ENCODE measurements at regions of chr15 and their contacts with region 1.

Region 1: DNA sequence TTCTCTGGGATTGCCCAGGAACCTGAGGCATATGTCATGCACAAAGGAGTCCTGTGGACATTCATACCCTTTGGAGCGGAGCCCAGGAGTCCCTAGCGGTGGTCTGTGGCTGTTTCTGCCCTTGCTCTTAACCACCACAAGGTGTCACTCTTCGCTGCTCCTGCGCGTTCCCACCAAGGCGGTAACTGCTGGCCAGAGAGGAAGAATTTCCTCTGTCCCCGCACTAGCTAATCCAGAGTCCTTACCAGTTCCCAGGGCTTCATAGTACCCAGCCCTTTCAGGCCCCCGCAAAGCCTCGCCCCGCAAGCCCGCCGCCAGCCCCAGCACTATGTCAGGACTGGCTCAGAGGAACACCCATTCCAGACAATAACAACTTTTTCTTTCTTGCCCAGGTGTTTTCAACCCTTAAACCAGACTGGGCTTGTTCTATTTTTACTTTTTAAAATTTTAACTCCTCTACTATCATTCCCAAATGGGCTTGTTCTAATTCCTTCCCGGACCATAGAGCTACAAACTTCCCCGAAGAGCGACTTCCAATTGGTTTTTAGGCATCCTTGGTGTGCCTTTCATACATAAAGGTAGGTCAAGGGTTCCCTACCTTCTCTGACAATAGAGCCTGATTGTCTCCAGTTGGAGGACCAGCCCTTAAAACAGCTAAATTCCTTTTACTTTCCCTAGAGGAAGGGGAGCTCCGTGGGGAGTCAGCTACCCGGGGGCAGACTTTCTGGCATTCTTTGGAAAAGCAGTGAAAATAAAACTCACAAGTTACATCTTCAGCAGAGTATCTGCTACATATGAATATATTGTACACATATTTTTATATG is 31.8 kb upstream of the ZNF774 start:
- DNase-seq: peak; percentile 88
- H3K4me3 ChIP-seq: peak overlapping the region; percentile 14 to 24 (median 15)
- H3K27ac ChIP-seq: peak overlapping the region; percentile 49
- H3K4me1 ChIP-seq: peaks cover 18% of the 10 kb centered on the region
- H3K27me3 ChIP-seq: no peaks in the 10 kb centered on the region
- CTCF ChIP-seq: peak; percentile 99 to 100

Region 2: DNA sequence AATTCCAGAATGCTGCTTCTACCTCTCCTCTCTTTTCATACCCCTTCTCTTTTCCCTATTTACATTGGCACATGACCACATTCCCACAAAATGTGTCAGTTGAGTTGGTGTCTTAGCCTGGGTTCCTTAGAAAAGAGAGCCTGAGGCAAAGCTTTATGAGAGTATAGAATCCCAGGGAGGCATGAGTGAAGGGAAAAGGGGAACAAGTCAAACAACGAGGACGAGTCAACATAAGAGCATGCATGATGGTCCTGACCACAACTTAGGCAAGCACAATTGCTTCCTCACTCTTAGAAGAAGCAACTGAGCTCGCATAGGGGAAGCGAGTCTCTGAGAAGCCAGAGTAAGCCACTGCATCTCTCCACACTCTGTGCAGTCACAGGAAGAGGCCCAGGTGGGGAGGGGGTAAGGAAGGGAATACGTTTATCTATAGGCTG is 16.4 kb after region 1 on chr15:
- CTCF ChIA-PET with region 1: interaction called, 15 read pairs
- dilution Hi-C with region 1: no loop called
- in situ Hi-C with region 1: no loop called
- intact Hi-C with region 1: no loop called
- DNase-seq: peak; percentile 90
- H3K4me3 ChIP-seq: no peak overlapping the region
- H3K27ac ChIP-seq: peak overlapping the region; percentile 70
- H3K4me1 ChIP-seq: peaks cover 28% of the 10 kb centered on the region
- H3K27me3 ChIP-seq: no peaks in the 10 kb centered on the region
- CTCF ChIP-seq: no peak

Region 3: GRCh38 chr15:90387537-90388461 is 67.5 kb after region 1 on chr15 and contains the start of gene IQGAP1:
- CTCF ChIA-PET with region 1: no interaction called
- dilution Hi-C with region 1: no loop called
- in situ Hi-C with region 1: no loop called
- intact Hi-C with region 1: loop called (anchors 1 kb)
- DNase-seq: peak; percentile 94
- H3K4me3 ChIP-seq: peak within 1 kb of the TSS; percentile 56 to 100 (median 99)
- H3K27ac ChIP-seq: peak within 1 kb of the TSS; percentile 89
- H3K4me1 ChIP-seq: peaks cover 16% of the 10 kb centered on the region
- H3K27me3 ChIP-seq: no peaks in the 10 kb centered on the region
- CTCF ChIP-seq: no peak
- total RNA-seq, gene IQGAP1: 247 to 272 TPM

Region 4: GRCh38 chr15:90463381-90463780 is 143.1 kb after region 1 on chr15:
- CTCF ChIA-PET with region 1: interaction called, 18 read pairs
- dilution Hi-C with region 1: no loop called
- in situ Hi-C with region 1: loop called in 1 of 2 experiments (anchors 25 kb)
- intact Hi-C with region 1: no loop called
- DNase-seq: peak; percentile 64
- H3K4me3 ChIP-seq: no peak overlapping the region
- H3K27ac ChIP-seq: no peak overlapping the region
- H3K4me1 ChIP-seq: peaks cover 19% of the 10 kb centered on the region
- H3K27me3 ChIP-seq: no peaks in the 10 kb centered on the region
- CTCF ChIP-seq: no peak

Region 5: DNA sequence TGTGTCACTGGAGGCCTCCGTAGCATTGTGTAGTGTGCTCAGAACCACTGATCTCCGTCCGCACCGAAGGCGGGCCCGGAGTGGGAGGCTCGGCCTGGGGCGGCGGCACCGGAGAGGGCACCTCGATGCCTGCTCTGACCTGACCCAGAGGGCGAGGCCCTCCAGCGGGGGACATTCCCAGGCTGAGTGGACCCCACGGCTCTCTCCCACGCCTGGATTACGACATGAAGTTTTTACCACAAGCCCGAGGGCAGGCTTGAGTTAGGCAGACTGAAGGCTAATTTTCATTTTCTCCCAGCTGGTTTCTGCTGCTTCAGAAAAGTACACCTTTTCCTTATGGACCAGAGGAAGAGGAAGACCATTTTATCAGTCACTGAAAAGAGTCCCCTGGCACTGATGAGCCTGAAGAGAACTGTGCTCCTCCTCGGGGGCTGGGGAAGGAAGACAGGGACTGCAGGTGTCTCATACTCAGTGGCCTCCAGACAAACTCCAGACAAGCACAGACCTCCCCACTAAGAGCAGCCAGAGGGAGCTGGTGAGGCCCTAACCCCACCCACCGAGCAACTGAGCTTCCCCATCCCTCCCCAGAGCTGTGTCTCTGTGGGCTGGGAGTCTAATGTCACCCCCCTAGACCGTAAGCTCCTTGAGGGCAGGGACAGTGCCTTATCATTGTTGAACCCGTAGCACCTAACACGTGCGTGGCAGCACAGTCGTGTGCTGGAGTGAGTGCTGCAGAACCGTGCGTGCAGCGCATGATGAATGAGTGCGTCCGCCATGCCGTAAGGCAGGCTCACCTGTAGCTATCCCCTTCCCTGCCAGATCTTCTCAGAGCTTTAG is 322.4 kb after region 1 on chr15:
- CTCF ChIA-PET with region 1: no interaction called
- dilution Hi-C with region 1: no loop called
- in situ Hi-C with region 1: no loop called
- intact Hi-C with region 1: loop called (anchors 2 kb)
- DNase-seq: peak; percentile 79
- H3K4me3 ChIP-seq: no peak overlapping the region
- H3K27ac ChIP-seq: peak overlapping the region; percentile 3
- H3K4me1 ChIP-seq: peaks cover 16% of the 10 kb centered on the region
- H3K27me3 ChIP-seq: no peaks in the 10 kb centered on the region
- CTCF ChIP-seq: peak in 1 of 2 donors; percentile 45

Region 6: GRCh38 chr15:91022075-91022835 is 702.0 kb after region 1 on chr15 and contains the start of gene VPS33B:
- CTCF ChIA-PET with region 1: interaction called, 33 read pairs
- dilution Hi-C with region 1: no loop called
- in situ Hi-C with region 1: no loop called
- intact Hi-C with region 1: no loop called
- DNase-seq: peak; percentile 83
- H3K4me3 ChIP-seq: peak within 1 kb of the TSS; percentile 52 to 77 (median 75)
- H3K27ac ChIP-seq: peak within 1 kb of the TSS; percentile 19
- H3K4me1 ChIP-seq: peaks cover 10% of the 10 kb centered on the region
- H3K27me3 ChIP-seq: no peaks in the 10 kb centered on the region
- CTCF ChIP-seq: no peak
- total RNA-seq, gene VPS33B: 8.7 to 19.9 TPM

Measured in mammary epithelial cell (primary cell).